CD4-positive, alpha-beta memory T cell (primary cell): ENCODE measurements at regions of chr1 and their contacts with region 1.

Region 1: DNA sequence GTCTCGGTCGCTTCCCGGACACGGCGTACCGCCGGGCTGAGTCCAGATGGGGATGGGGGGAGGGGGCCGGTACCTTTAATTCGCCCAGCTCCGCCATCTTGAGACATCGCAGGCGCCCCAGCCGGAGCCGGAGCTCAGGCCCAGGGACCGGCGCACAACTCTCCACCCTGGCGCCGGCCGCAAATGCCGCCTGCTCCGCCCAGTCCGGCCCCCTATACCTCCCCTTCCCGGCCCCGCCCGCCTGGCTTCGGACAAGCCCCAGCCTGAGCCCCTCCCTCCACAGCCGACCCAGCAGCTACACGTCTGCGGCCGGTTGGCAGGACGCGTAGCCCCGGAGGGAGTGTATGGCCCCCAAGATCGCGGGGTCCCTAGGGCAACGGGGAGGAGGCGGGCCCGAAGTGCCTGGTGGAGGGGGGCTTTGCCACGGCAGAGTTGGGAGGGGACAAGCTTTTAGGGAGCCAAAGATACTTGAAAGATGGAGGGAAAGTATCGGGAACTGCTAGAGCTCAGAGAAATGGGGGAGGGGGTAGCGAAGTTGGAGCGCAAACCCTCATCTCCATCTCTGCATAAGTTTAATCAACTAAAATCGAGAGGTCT is at the start of gene PIAS3:
- DNase-seq: peak; percentile 76 to 84 (median 80)
- H3K4me3 ChIP-seq: peak within 1 kb of the TSS; percentile 90 to 96
- H3K4me3 Mint-ChIP-seq: peak within 1 kb of the TSS; percentile 92 to 97 (median 96)
- H3K27ac ChIP-seq: peak within 1 kb of the TSS; percentile 74
- H3K27ac Mint-ChIP-seq: peak within 1 kb of the TSS; percentile 89 to 97 (median 90)
- H3K4me1 ChIP-seq: peaks cover 17% of the 10 kb centered on the region
- H3K4me1 Mint-ChIP-seq: peaks cover 8 to 29% (median 19%) of the 10 kb centered on the region in 4 donors
- H3K27me3 ChIP-seq: no peaks in the 10 kb centered on the region
- H3K27me3 Mint-ChIP-seq: peaks cover 0 to 2% of the 10 kb centered on the region in 2 donors
- total RNA-seq, gene PIAS3: 30.3 to 33.6 TPM

Region 2: DNA sequence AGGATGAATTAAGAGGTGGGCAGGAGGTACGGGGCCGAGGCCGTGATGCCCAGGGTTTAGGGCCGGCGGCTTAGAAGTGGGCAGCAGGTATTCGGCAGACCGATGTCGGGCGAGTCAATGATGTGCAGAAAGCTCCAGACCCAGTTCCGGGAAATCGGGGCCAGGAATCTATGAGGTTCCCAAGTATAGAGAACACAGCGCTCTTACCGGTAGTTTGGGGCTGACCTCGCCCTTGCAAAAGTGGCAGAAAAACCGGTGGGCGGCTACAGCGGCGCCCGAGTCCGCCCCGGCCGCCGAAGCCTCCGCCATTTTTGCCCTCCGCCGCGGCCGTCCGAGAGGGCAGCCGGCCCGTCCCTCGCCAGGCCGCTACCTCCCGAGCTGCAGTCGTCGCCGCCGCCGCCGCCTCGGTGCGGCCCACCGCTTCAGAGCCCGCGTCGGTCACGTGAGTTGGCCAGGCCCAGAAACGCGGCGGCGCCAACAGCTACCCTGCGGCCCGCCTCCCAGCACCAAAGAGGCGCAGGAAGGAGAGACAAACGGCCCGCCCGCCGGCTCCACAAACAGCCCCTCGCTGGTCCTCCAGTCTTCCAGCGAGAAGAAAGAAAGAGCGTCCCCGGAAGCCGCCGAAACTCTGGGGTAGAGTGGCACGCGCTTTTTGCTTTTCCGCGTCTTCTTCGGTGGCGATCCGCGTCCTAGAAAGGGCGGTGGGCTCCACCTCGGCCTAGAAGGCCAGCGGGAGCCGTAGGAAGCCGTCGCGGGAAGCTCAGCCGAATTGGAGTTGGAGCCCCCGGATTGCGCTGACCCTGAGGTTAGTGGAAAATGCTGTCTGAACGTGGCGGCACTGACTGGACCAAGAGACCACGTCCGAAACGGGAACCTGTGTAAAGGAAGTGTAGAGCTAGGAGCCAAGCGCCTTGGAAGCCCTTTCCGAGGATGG is 35.2 kb before region 1 on chr1 and contains the starts of genes POLR3C and RNF115:
- CTCF ChIA-PET with region 1: no interaction called
- POLR2A ChIA-PET with region 1: interaction called, 58 read pairs
- intact Hi-C with region 1: loop called (anchors 1 kb)
- DNase-seq: peak; percentile 84 to 92 (median 86)
- H3K4me3 ChIP-seq: peak within 1 kb of the TSS; percentile 93 to 100
- H3K4me3 Mint-ChIP-seq: peak within 1 kb of the TSS; percentile 97 to 99 (median 98)
- H3K27ac ChIP-seq: peak within 1 kb of the TSS; percentile 78
- H3K27ac Mint-ChIP-seq: peak within 1 kb of the TSS; percentile 90 to 99 (median 97)
- H3K4me1 ChIP-seq: peaks cover 23% of the 10 kb centered on the region
- H3K4me1 Mint-ChIP-seq: peaks cover 17 to 35% (median 24%) of the 10 kb centered on the region in 4 donors
- H3K27me3 ChIP-seq: no peaks in the 10 kb centered on the region
- H3K27me3 Mint-ChIP-seq: no peaks in the 10 kb centered on the region
- total RNA-seq, gene POLR3C: 43.5 to 44.8 TPM
- total RNA-seq, gene RNF115: 15.2 to 15.3 TPM

Region 3: GRCh38 chr1:145885738-145886287 is 26.8 kb after region 1 on chr1 and contains the start of gene ANKRD35:
- CTCF ChIA-PET with region 1: interaction called, 13 read pairs
- POLR2A ChIA-PET with region 1: interaction called, 22 read pairs
- intact Hi-C with region 1: loop called (anchors 1 kb)
- DNase-seq: peak; percentile 83 to 91 (median 85)
- H3K4me3 ChIP-seq: peak within 1 kb of the TSS; percentile 6 to 74
- H3K4me3 Mint-ChIP-seq: peak within 1 kb of the TSS; percentile 74 to 88 (median 84)
- H3K27ac ChIP-seq: no peak within 1 kb of the TSS
- H3K27ac Mint-ChIP-seq: peak within 1 kb of the TSS in 6 of 7 donors; percentile 3 to 91 (median 62)
- H3K4me1 ChIP-seq: peaks cover 13% of the 10 kb centered on the region
- H3K4me1 Mint-ChIP-seq: peaks cover 10 to 28% (median 14%) of the 10 kb centered on the region in 4 donors
- H3K27me3 ChIP-seq: peaks cover 11% of the 10 kb centered on the region
- H3K27me3 Mint-ChIP-seq: peaks cover 10 to 21% of the 10 kb centered on the region in 2 donors
- total RNA-seq, gene ANKRD35: not detected

Region 4: DNA sequence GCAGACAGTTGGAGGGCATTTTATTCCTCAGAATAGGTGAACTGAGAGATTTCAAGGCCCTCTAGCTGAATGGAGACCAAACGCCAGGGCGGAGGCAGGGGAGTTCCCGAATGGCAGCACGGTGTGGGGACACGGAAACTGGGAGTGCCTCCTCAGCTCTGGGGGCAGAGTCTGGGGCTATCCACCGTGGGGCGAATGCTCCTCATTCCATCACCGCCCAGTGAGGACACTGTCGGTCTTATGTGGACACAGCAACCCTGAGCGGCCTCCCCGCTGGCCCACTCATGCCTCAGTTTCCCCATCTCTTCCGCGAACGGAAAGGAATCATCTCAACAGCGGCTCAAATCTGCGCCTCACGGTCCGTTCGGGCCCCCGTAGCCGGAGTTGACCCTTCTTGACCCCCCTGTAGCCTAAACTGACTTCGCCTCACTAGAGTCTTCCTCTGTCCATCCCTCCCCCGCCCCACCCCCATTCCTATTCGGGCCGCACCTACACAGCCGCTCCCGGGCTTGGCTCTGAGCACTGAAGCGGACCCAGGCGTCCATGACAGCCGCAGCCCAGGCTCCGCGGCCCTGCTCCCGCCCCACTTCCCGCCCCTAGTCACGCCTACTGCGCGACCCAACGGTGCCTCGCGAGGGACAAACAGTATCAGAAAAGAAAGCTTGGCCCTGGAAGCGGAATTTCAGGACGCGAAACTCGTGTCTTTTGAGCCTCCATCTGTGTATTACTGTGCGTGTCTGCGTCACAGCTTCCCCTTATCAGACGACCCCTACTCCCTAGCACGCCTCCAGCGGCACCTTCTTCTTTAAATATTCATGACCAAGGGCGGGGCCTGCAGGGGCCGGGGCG is 59.4 kb after region 1 on chr1 and contains the start of gene PEX11B:
- CTCF ChIA-PET with region 1: interaction called, 6 read pairs
- POLR2A ChIA-PET with region 1: interaction called, 58 read pairs
- intact Hi-C with region 1: loop called (anchors 1 kb)
- DNase-seq: peak; percentile 90 to 96 (median 92)
- H3K4me3 ChIP-seq: peak within 1 kb of the TSS; percentile 90 to 96
- H3K4me3 Mint-ChIP-seq: peak within 1 kb of the TSS; percentile 89 to 96 (median 92)
- H3K27ac ChIP-seq: peak within 1 kb of the TSS; percentile 79
- H3K27ac Mint-ChIP-seq: peak within 1 kb of the TSS; percentile 91 to 97 (median 95)
- H3K4me1 ChIP-seq: peaks cover 28% of the 10 kb centered on the region
- H3K4me1 Mint-ChIP-seq: peaks cover 24 to 45% (median 35%) of the 10 kb centered on the region in 4 donors
- H3K27me3 ChIP-seq: no peaks in the 10 kb centered on the region
- H3K27me3 Mint-ChIP-seq: no peaks in the 10 kb centered on the region
- total RNA-seq, gene PEX11B: 34.7 to 38.7 TPM

Region 5: GRCh38 chr1:145963995-145964901 is 105.3 kb after region 1 on chr1 and contains the starts of genes ANKRD34A and POLR3GL:
- CTCF ChIA-PET with region 1: interaction called, 5 read pairs
- POLR2A ChIA-PET with region 1: interaction called, 31 read pairs
- intact Hi-C with region 1: loop called (anchors 1 kb)
- DNase-seq: peak; percentile 88 to 97 (median 90)
- H3K4me3 ChIP-seq: peak within 1 kb of the TSS; percentile 65 to 94
- H3K4me3 Mint-ChIP-seq: peak within 1 kb of the TSS; percentile 89 to 95 (median 93)
- H3K27ac ChIP-seq: peak within 1 kb of the TSS; percentile 71
- H3K27ac Mint-ChIP-seq: peak within 1 kb of the TSS; percentile 89 to 99 (median 98)
- H3K4me1 ChIP-seq: peaks cover 62% of the 10 kb centered on the region
- H3K4me1 Mint-ChIP-seq: peaks cover 32 to 72% (median 45%) of the 10 kb centered on the region in 4 donors
- H3K27me3 ChIP-seq: no peaks in the 10 kb centered on the region
- H3K27me3 Mint-ChIP-seq: no peaks in the 10 kb centered on the region
- total RNA-seq, gene ANKRD34A: 1.8 to 2.1 TPM
- total RNA-seq, gene POLR3GL: 36.6 to 38.3 TPM

Region 6: GRCh38 chr1:146036965-146037646 is 178.1 kb after region 1 on chr1:
- CTCF ChIA-PET with region 1: interaction called, 4 read pairs
- POLR2A ChIA-PET with region 1: interaction called, 36 read pairs
- intact Hi-C with region 1: loop called (anchors 1 kb)
- DNase-seq: peak; percentile 82 to 85 (median 84)
- H3K4me3 ChIP-seq: peak overlapping the region; percentile 65 to 77
- H3K4me3 Mint-ChIP-seq: peak overlapping the region; percentile 93 to 99 (median 97)
- H3K27ac ChIP-seq: peak overlapping the region; percentile 62
- H3K27ac Mint-ChIP-seq: peak overlapping the region; percentile 94 to 100 (median 97)
- H3K4me1 ChIP-seq: peaks cover 25% of the 10 kb centered on the region
- H3K4me1 Mint-ChIP-seq: peaks cover 16 to 56% (median 29%) of the 10 kb centered on the region in 4 donors
- H3K27me3 ChIP-seq: no peaks in the 10 kb centered on the region
- H3K27me3 Mint-ChIP-seq: peaks cover 2 to 27% of the 10 kb centered on the region in 2 donors